PC-9 (cell line): ENCODE measurements at regions of chr10 and their contacts with region 1.

Region 1: GRCh38 chr10:92689663-92690210 is at the start of gene HHEX:
- DNase-seq: peak; percentile 48 to 61
- H3K4me3 ChIP-seq: peak within 1 kb of the TSS; percentile 83
- H3K27ac ChIP-seq: no peak within 1 kb of the TSS
- H3K4me1 ChIP-seq: peaks cover 9% of the 10 kb centered on the region; the same call in 1 of the 2 replicates
- H3K27me3 ChIP-seq: no peaks in the 10 kb centered on the region
- CTCF ChIP-seq: no peak
- total RNA-seq, gene HHEX: 5.8 and 7.8 TPM in 2 replicates

Region 2: DNA sequence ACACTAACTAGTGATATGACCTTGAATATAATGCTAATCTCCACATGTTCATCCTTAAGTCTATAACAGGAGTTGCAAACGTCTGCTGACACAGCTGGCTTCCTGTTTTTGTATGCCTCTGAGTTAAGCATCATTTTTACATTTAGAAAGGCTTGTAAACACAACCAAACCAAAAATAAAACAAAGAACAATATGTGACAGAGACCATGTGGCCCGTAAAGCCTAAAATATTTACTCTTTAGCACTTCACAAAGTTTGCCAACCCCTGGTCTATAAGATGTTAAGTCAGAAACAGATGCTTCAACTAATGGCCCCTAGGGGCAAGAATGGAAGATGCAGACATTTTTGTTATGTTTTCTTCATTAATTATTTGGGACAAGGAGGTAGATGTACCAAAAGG is 508.2 kb before region 1 on chr10:
- CTCF ChIA-PET with region 1: no interaction called
- POLR2A ChIA-PET with region 1: no interaction called
- intact Hi-C with region 1: no loop called
- DNase-seq: no peak
- H3K4me3 ChIP-seq: no peak overlapping the region
- H3K27ac ChIP-seq: no peak overlapping the region
- H3K4me1 ChIP-seq: no peaks in the 10 kb centered on the region
- H3K27me3 ChIP-seq: no peaks in the 10 kb centered on the region
- CTCF ChIP-seq: no peak; the same call in 1 of the 2 replicates

Region 3: GRCh38 chr10:92839191-92840085 is 149.7 kb after region 1 on chr10:
- CTCF ChIA-PET with region 1: no interaction called
- POLR2A ChIA-PET with region 1: no interaction called
- intact Hi-C with region 1: loop called (anchors 5 kb)
- DNase-seq: no peak
- H3K4me3 ChIP-seq: no peak overlapping the region
- H3K27ac ChIP-seq: no peak overlapping the region
- H3K4me1 ChIP-seq: peaks cover 8% of the 10 kb centered on the region
- H3K27me3 ChIP-seq: no peaks in the 10 kb centered on the region
- CTCF ChIP-seq: no peak

Region 4: DNA sequence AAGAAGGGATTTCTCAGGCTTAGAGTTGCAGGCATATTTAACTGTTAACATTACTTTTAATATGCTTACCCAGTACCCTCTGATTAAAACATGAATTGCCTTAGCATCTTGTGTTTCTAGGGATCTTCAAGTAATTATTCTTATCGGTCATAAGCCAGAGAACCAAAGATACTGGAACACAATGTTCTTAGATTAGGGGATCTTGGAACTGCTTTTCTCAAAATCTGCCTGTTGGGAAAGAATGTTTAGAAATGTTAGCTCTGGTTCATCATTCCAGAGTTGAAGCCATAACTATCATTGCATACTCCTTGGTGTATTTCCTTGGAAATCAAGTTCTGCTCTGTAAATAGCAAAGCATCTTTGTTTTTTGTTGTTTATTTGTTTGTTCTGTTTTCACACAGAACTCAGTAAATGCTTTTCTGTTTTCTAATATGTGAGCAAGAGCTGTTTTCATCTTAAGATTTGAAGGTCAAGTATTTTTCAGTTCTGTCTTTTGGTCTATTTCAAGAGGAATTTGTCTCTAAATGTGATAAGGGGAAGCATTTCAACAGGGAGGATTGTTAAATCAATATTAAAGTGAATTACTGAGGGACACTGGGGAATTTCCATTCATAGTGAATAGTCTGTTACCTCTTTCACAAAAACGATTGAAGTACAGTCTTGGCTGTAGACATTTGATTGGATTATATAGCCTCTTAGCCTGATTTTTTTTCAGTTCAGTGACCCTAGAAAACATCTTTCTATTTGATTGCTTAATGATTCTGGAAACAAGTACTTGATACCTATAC is 267.7 kb after region 1 on chr10:
- CTCF ChIA-PET with region 1: interaction called, 15 read pairs
- POLR2A ChIA-PET with region 1: no interaction called
- intact Hi-C with region 1: no loop called
- DNase-seq: no peak
- H3K4me3 ChIP-seq: no peak overlapping the region
- H3K27ac ChIP-seq: no peak overlapping the region
- H3K4me1 ChIP-seq: no peaks in the 10 kb centered on the region
- H3K27me3 ChIP-seq: no peaks in the 10 kb centered on the region
- CTCF ChIP-seq: no peak

Region 5: DNA sequence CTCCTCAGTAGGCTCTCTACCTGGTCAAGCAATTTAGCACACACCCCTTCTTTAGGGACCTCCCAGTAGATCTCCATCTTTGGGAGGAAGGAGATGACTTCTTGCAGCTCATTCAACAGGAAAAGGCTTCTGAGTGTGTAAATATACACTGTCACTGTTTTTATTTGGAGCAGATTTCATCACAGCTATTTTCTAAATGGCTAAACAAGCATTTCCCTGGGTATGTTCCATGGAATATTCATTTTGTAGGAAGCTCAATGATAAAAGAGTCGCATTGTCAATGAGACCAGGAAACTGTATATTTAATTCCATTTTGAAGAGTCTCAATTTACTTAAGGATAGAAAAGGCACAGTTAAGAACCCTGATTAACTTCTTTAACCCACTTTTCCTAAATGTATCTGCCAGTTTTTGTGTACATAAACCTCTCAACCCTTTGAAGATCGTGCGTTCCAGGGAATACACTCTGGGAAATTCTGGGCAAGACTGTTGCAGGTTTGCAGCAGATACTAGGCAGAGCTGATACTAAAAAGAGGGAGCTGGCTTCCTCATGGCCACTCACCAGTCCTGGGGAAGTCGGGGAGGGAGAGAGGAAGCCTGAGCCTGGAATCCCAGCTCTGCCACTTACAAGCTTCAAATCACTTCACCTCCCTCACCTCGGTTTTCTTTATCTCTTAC is 1078.1 kb after region 1 on chr10:
- CTCF ChIA-PET with region 1: no interaction called
- POLR2A ChIA-PET with region 1: interaction called, 12 read pairs
- intact Hi-C with region 1: no loop called
- DNase-seq: no peak
- H3K4me3 ChIP-seq: no peak overlapping the region
- H3K27ac ChIP-seq: no peak overlapping the region
- H3K4me1 ChIP-seq: no peaks in the 10 kb centered on the region
- H3K27me3 ChIP-seq: no peaks in the 10 kb centered on the region
- CTCF ChIP-seq: no peak